Activated naive CD4-positive, alpha-beta T cell treated with anti-CD3 and anti-CD28 coated beads for 36 hours (primary cell): ENCODE measurements at regions of chr2 and their contacts with region 1.

Region 1: GRCh38 chr2:186256540-186256939 is 229.5 kb upstream of the ZC3H15 start:
- DNase-seq: no peak
- H3K4me3 Mint-ChIP-seq: no peak overlapping the region
- H3K27ac Mint-ChIP-seq: no peak overlapping the region
- H3K4me1 Mint-ChIP-seq: no peaks in the 10 kb centered on the region
- H3K27me3 Mint-ChIP-seq: no peaks in the 10 kb centered on the region

Region 2: GRCh38 chr2:185628985-185629384 is 627.6 kb before region 1 on chr2:
- CTCF ChIA-PET with region 1: no interaction called
- intact Hi-C with region 1: loop called (anchors 10 kb)
- DNase-seq: peak; percentile 8
- H3K4me3 Mint-ChIP-seq: no peak overlapping the region
- H3K27ac Mint-ChIP-seq: no peak overlapping the region
- H3K4me1 Mint-ChIP-seq: no peaks in the 10 kb centered on the region
- H3K27me3 Mint-ChIP-seq: no peaks in the 10 kb centered on the region

Region 3: GRCh38 chr2:185738679-185739472 is 517.7 kb before region 1 on chr2 and contains the start of gene FSIP2:
- CTCF ChIA-PET with region 1: no interaction called
- intact Hi-C with region 1: loop called (anchors 2 kb)
- DNase-seq: peak; percentile 44
- H3K4me3 Mint-ChIP-seq: no peak within 1 kb of the TSS
- H3K27ac Mint-ChIP-seq: no peak within 1 kb of the TSS
- H3K4me1 Mint-ChIP-seq: no peaks in the 10 kb centered on the region
- H3K27me3 Mint-ChIP-seq: peaks cover 31% of the 10 kb centered on the region
- total RNA-seq, gene FSIP2: 0.14 TPM in 1 of 2 experiments, not detected in the other

Region 4: GRCh38 chr2:185952098-185952497 is 304.4 kb before region 1 on chr2:
- CTCF ChIA-PET with region 1: no interaction called
- intact Hi-C with region 1: no loop called
- DNase-seq: no peak
- H3K4me3 Mint-ChIP-seq: no peak overlapping the region
- H3K27ac Mint-ChIP-seq: no peak overlapping the region
- H3K4me1 Mint-ChIP-seq: no peaks in the 10 kb centered on the region
- H3K27me3 Mint-ChIP-seq: no peaks in the 10 kb centered on the region

Region 5: DNA sequence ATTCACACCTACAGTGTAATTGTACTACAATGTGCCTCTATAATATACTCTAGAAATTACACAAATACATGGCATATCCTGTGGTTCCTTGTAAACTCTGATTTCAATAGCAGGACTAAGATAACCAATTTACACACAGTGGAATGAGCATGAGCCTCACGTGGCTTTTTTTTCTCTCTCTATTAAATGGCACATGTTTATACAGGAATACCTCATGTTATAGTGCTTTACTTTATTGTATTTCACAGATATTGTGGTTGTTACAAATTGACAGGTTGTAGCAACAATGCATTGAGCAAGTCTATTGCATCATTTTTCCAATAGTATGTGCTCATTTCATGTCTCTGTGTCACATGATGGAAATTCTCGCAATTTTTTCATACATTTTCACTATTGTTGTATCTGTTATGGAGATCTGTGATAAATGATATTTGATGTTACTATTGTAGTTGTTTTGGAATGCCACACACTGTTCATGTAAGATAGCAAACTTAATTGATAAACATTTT is 257.9 kb before region 1 on chr2:
- CTCF ChIA-PET with region 1: no interaction called
- intact Hi-C with region 1: no loop called
- DNase-seq: no peak
- H3K4me3 Mint-ChIP-seq: no peak overlapping the region
- H3K27ac Mint-ChIP-seq: no peak overlapping the region
- H3K4me1 Mint-ChIP-seq: peaks cover 4% of the 10 kb centered on the region
- H3K27me3 Mint-ChIP-seq: no peaks in the 10 kb centered on the region

Region 6: GRCh38 chr2:186460465-186460864 is 203.9 kb after region 1 on chr2:
- CTCF ChIA-PET with region 1: no interaction called
- intact Hi-C with region 1: loop called (anchors 10 kb)
- DNase-seq: no peak
- H3K4me3 Mint-ChIP-seq: no peak overlapping the region
- H3K27ac Mint-ChIP-seq: no peak overlapping the region
- H3K4me1 Mint-ChIP-seq: peaks cover 6% of the 10 kb centered on the region
- H3K27me3 Mint-ChIP-seq: no peaks in the 10 kb centered on the region

Region 7: DNA sequence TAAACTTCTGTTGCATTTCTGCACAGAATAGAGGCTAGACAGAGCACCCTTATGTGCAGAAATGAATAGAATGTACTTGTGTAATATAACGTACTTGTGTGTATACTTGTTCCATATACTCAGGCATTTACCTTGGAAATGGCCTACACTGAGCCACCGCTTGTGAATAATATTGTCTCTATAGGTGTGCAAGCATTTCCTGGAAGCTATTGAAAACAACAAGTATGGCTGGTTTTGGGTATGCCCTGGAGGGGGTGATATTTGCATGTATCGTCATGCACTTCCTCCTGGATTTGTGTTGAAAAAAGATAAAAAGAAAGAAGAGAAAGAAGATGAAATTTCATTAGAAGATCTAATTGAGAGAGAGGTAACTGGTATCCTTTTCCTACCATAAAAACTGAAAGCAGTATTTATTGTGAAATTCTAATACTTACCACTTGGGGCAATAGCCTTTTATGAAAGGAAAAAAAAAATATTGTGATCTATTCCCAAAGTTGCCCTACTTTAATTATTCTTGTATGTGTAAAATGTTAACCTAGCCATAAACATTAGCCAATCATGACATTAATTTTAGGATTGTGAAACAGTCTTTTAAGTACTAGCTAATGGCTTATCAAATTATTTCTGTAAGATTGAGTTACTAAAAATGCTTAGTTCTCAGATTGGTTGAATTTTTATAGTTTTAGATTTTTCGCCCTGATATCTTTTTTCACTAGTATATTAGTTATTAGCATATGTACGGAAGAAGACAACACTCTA is 247.5 kb after region 1 on chr2:
- CTCF ChIA-PET with region 1: no interaction called
- intact Hi-C with region 1: no loop called
- DNase-seq: no peak
- H3K4me3 Mint-ChIP-seq: no peak overlapping the region
- H3K27ac Mint-ChIP-seq: peak overlapping the region; percentile 46
- H3K4me1 Mint-ChIP-seq: peaks cover 9% of the 10 kb centered on the region
- H3K27me3 Mint-ChIP-seq: no peaks in the 10 kb centered on the region